ENCODE measurements at regions of chr1 and their contacts with region 1.

Region 1: DNA sequence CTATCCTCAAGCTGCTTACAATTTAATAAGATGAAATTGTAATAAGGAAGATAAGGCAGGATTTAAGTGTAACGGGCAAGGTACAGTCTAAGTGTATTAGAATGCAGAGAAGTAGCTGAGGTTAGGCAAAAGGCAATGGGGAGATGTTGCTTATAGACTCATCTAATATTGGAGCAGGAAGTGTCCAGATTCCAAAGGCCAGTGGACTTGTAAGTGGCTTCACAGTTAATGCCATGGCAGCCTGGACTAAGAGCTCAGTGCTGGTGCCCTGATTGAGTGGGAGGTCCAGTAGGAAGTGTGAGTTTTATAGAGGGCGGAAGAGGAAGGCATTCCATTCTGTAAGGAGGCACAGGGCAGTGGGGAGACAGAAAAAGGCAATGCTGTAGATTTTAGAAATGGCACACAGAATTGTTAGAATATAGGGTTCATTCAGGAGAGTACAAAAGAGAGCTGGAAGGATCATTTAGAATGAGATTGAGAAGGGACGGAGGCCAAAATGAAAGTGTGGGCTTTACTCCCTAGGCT is 12.6 kb downstream of the MAP3K21 start:
- DNase-seq: no peak
- ATAC-seq: no peak
- H3K4me3 ChIP-seq: no peak overlapping the region
- H3K27ac ChIP-seq: no peak overlapping the region
- H3K4me1 ChIP-seq: no peaks in the 10 kb centered on the region
- H3K27me3 ChIP-seq: no peaks in the 10 kb centered on the region
- CTCF ChIP-seq: no peak

Region 2: DNA sequence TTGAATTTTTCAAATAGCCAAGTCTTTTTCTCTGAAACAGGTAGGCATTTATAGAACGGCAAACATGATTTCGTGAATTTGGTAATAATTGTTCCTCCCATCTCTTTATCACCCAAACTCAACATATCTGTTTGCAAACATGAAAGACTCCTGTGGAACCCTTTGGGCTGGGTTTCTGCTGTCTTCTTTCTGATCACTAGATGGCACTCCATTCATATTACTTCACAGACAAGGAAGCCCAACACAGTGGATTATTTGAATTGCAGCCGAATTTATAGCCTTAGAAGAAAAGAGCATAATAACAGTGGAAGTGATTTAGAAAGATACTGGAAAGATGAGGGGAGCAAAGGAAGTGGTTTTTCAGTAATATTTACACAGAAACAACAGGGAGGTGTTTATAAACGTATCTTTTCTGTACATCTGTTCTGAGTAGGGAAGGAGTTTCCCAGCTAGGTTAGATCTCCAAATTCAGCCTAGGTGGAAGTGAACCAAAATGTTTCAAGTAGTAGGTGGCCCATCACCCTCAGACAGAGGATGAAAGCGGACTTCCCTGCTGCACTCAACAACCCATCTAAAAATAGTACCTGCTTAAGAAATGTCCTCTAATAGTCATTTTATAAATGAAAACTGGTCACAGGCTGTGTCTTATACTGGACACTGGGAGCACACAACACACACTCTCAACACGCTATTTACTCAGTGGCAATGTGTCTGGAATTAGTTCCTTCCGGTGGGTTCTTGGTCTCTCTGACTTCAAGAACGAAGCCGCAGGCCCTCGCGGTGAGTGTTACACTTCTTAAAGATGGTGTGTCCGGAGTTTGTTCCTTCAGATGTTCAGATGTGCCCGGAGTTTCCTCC is 55.0 kb after region 1 on chr1:
- CTCF ChIA-PET with region 1: no interaction called
- POLR2A ChIA-PET with region 1: no interaction called
- intact Hi-C with region 1: no loop called
- DNase-seq: peak; percentile 90
- ATAC-seq: peak; percentile 97
- H3K4me3 ChIP-seq: no peak overlapping the region
- H3K27ac ChIP-seq: no peak overlapping the region
- H3K4me1 ChIP-seq: 0 out of 2 replicates have a peak, but pooled peaks cover 3% of the 10 kb centered on the region
- H3K27me3 ChIP-seq: no peaks in the 10 kb centered on the region
- CTCF ChIP-seq: peak; percentile 98

Region 3: DNA sequence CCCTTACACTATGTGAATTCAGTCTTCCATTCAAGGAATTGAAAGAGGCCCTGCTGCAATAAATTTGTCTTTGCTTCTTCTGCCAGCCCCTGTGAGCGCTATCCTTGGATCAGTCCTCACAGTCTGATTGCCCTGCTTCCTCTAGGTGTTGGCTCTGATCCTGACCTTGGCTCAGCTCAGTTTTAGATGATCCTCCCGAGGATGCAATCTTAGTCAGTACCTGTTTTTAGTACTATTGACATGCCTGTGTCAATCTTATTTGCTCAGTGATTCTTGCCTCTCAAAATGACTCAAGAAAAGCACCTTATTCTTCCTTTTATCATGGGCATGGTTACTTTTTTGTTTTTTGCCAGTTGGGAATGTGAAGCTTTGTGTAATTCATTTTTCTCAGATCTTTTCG is 172.4 kb after region 1 on chr1:
- CTCF ChIA-PET with region 1: no interaction called
- POLR2A ChIA-PET with region 1: interaction called, 10 read pairs
- intact Hi-C with region 1: no loop called
- DNase-seq: peak; percentile 77
- ATAC-seq: peak; percentile 76
- H3K4me3 ChIP-seq: no peak overlapping the region
- H3K27ac ChIP-seq: no peak overlapping the region
- H3K4me1 ChIP-seq: peaks cover 22% of the 10 kb centered on the region
- H3K27me3 ChIP-seq: no peaks in the 10 kb centered on the region
- CTCF ChIP-seq: no peak